HAP-1 (cell line): ENCODE measurements at regions of chr6 and their contacts with region 1.

Region 1: DNA sequence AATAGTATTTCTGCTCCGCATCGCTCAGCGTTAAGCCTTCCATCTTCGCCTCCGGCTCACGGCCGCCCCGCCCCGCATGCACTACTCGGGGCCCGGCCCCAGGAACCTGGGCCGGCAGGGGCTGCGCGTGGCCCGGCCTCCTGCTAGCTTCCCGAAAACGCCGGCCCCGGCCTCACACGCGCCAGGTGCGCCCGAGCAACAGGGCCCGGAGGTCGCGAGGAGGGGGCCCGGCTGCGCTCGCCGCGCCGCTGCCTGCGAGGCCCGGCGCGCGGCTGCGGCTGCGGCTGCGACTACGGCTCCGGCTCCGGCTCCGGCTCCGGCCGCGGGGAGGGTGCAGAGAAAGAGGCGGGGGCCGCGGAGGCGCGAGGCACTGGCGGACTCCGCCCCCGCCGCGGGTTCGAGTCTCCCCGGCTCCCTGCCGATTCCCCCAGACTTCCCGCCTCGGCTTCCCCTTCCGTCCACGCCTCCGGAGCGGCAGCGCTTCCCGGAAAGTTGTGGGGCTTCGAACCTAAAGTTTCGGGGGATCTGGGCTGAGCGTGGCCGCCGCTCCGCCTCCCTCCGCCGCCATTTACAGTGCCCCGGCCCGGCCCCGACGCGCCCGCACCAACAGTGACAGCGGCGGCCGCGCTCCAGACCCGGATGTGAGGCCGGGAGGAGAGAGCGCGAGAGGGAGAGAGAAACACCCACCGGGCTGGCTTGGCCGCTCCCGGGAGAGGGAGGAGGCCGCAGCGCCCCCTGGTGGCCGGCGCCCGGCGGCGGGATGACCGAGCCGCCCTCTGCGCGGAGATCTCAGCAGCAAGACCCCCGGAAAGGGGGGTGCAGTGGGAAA is at the start of gene REPS1:
- DNase-seq: peak; percentile 83 to 94
- H3K4me3 ChIP-seq: peak within 1 kb of the TSS; percentile 87
- H3K4me1 ChIP-seq: peaks cover 23% of the 10 kb centered on the region
- H3K27me3 ChIP-seq: no peaks in the 10 kb centered on the region

Region 2: GRCh38 chr6:138824482-138825144 is 163.2 kb before region 1 on chr6:
- in situ Hi-C with region 1: loop called (anchors 10 kb)
- DNase-seq: no peak
- H3K4me3 ChIP-seq: no peak overlapping the region
- H3K4me1 ChIP-seq: peaks cover 7% of the 10 kb centered on the region; the same call in 1 of the 2 replicates
- H3K27me3 ChIP-seq: no peaks in the 10 kb centered on the region

Region 3: DNA sequence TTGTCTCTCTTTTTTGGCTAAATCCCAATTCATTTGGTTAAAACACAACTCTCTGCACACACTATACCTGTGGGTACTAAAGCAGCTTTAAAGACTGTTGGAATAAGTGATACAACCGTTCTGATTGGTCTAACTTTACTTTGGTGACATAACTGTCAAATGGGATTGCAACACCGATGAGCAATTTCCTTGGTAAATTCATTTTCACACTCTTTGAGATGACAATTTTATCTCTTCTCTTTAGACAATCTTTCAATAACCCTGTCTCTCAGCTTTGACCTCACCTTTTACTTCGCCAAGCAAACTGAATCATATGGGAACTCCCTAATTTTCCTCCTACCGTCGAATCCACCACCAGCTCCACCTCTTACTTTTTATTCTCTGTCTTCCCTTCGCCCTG is 131.2 kb before region 1 on chr6:
- in situ Hi-C with region 1: no loop called
- DNase-seq: no peak
- H3K4me3 ChIP-seq: no peak overlapping the region
- H3K4me1 ChIP-seq: no peaks in the 10 kb centered on the region; the same call in 1 of the 2 replicates
- H3K27me3 ChIP-seq: no peaks in the 10 kb centered on the region

Region 4: GRCh38 chr6:139336488-139336887 is 348.6 kb after region 1 on chr6:
- in situ Hi-C with region 1: no loop called
- DNase-seq: peak in 1 of 2 experiments; percentile 12
- H3K4me3 ChIP-seq: no peak overlapping the region
- H3K4me1 ChIP-seq: peaks cover 3% of the 10 kb centered on the region; the same call in 1 of the 2 replicates
- H3K27me3 ChIP-seq: no peaks in the 10 kb centered on the region